OCI-LY7 (cell line): ENCODE measurements at regions of chr17 and their contacts with region 1.

Region 1: GRCh38 chr17:29589524-29590410 is at the start of gene GIT1:
- DNase-seq: peak; percentile 92
- H3K4me3 ChIP-seq: peak within 1 kb of the TSS; percentile 79
- H3K27ac ChIP-seq: peak within 1 kb of the TSS; percentile 61
- H3K4me1 ChIP-seq: peaks cover 68% of the 10 kb centered on the region
- CTCF ChIP-seq: 0 out of 2 replicates have a peak, but pooled peaks have one; percentile 4
- total RNA-seq, gene GIT1: 38.8 and 44.3 TPM in 2 replicates

Region 2: GRCh38 chr17:29293890-29294579 is 295.7 kb before region 1 on chr17 and contains the start of gene NUFIP2:
- CTCF ChIA-PET with region 1: no interaction called
- POLR2A ChIA-PET with region 1: no interaction called
- intact Hi-C with region 1: loop called (anchors 1 kb)
- DNase-seq: peak; percentile 99
- H3K4me3 ChIP-seq: peak within 1 kb of the TSS; percentile 95
- H3K27ac ChIP-seq: peak within 1 kb of the TSS; percentile 88
- H3K4me1 ChIP-seq: peaks cover 23% of the 10 kb centered on the region
- CTCF ChIP-seq: no peak
- total RNA-seq, gene NUFIP2: 36.0 and 37.1 TPM in 2 replicates

Region 3: DNA sequence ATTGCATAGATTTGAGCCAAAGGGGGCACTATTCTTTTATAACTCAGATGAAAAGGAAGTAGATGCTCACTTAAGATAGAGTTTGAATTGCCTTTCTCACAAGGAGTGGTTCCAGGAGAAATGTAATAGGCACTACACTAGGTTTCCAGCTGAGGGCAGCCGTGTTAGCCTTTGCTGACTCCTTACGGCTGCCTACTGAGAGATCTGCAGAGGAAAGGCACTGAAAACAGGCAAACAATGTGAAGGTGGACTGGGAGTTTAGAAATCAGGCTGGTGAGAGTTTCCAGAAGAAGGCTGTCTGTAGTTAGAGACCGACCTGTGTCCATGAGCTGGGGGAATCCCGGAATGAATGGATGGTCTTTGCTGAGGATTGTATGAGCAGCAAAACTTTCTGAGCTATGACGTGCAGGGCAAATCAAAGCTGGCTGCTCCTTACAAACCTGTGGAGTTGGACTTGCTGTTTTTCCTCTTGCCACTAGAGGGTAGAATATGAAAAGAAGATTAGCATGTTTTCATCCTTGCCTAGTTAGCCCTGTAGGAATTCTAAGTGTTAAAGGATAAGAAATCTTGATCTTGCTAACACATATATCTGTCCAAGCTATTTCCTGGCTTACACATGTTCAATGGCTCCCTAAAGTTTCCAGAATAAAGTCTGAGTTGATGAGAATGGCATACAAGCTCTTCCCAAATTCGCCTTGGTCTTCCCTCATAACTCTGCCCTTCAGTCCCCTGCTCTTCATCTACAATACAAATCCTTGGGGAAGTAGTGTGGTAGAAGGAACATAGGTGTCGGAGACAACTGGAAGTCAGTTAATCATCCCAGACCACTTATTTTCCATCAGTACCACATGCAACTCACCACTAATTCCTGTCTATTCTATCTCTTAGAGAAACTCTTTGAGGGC is 219.7 kb before region 1 on chr17:
- CTCF ChIA-PET with region 1: interaction called, 12 read pairs
- POLR2A ChIA-PET with region 1: no interaction called
- intact Hi-C with region 1: no loop called
- DNase-seq: peak; percentile 86
- H3K4me3 ChIP-seq: peak overlapping the region; percentile 43
- H3K27ac ChIP-seq: no peak overlapping the region
- H3K4me1 ChIP-seq: no peaks in the 10 kb centered on the region
- CTCF ChIP-seq: peak; percentile 96

Region 4: GRCh38 chr17:29568331-29569244 is 21.2 kb before region 1 on chr17 and contains the start of gene TP53I13:
- CTCF ChIA-PET with region 1: interaction called, 10 read pairs
- POLR2A ChIA-PET with region 1: interaction called, 4 read pairs
- intact Hi-C with region 1: loop called (anchors 1 kb)
- DNase-seq: peak; percentile 93
- H3K4me3 ChIP-seq: peak within 1 kb of the TSS; percentile 72
- H3K27ac ChIP-seq: peak within 1 kb of the TSS; percentile 68
- H3K4me1 ChIP-seq: peaks cover 29% of the 10 kb centered on the region
- CTCF ChIP-seq: no peak
- total RNA-seq, gene TP53I13: 27.5 and 30.9 TPM in 2 replicates

Region 5: GRCh38 chr17:29747660-29748059 is 157.9 kb after region 1 on chr17:
- CTCF ChIA-PET with region 1: no interaction called
- POLR2A ChIA-PET with region 1: no interaction called
- intact Hi-C with region 1: no loop called
- DNase-seq: no peak
- H3K4me3 ChIP-seq: no peak overlapping the region
- H3K27ac ChIP-seq: no peak overlapping the region
- H3K4me1 ChIP-seq: peaks cover 24% of the 10 kb centered on the region
- CTCF ChIP-seq: no peak

Region 6: DNA sequence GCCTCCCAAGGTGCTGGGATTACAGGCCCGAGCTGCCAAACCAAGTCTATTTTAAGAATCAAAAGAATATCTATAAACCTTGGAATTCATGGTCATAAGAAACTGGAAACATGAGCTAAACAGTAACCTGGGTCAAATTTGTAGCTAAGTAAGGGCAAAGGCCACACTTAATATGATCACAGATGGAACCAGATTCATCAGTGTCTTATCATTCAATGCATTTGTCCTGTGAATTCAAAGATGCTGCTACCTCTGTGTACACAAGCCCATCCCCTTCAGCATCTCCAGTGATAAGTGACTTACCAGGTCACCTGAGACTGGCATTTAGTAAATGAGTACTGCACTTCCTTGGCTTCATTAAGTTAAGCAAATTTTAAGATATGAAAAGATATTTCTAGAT is 232.1 kb after region 1 on chr17:
- CTCF ChIA-PET with region 1: no interaction called
- POLR2A ChIA-PET with region 1: no interaction called
- intact Hi-C with region 1: no loop called
- DNase-seq: no peak
- H3K4me3 ChIP-seq: no peak overlapping the region
- H3K27ac ChIP-seq: no peak overlapping the region
- H3K4me1 ChIP-seq: no peaks in the 10 kb centered on the region
- CTCF ChIP-seq: no peak